Panc1 (cell line): ENCODE measurements at regions of chr7 and their contacts with region 1.

Region 1: GRCh38 chr7:151992375-151992774 is 33.1 kb upstream of the GALNT11 start:
- DNase-seq: peak; percentile 36
- ATAC-seq: peak; percentile 96
- H3K4me3 ChIP-seq: no peak overlapping the region
- H3K27ac ChIP-seq: no peak overlapping the region
- H3K4me1 ChIP-seq: peaks cover 3% of the 10 kb centered on the region; the same call in 1 of the 2 replicates
- H3K27me3 ChIP-seq: no peaks in the 10 kb centered on the region
- CTCF ChIP-seq: peak; percentile 77

Region 2: GRCh38 chr7:151459726-151460473 is 532.5 kb before region 1 on chr7:
- CTCF ChIA-PET with region 1: no interaction called
- POLR2A ChIA-PET with region 1: no interaction called
- in situ Hi-C with region 1: no loop called
- intact Hi-C with region 1: no loop called
- DNase-seq: peak; percentile 76
- ATAC-seq: peak; percentile 84
- H3K4me3 ChIP-seq: peak overlapping the region; percentile 7 to 45; a peak in 3 of 4 replicates
- H3K27ac ChIP-seq: peak overlapping the region; percentile 98
- H3K4me1 ChIP-seq: peaks cover 50% of the 10 kb centered on the region
- H3K27me3 ChIP-seq: no peaks in the 10 kb centered on the region
- CTCF ChIP-seq: no peak; the same call in 1 of the 2 replicates

Region 3: GRCh38 chr7:152025077-152025936 is 32.9 kb after region 1 on chr7 and contains the start of gene GALNT11:
- CTCF ChIA-PET with region 1: no interaction called
- POLR2A ChIA-PET with region 1: no interaction called
- in situ Hi-C with region 1: no loop called
- intact Hi-C with region 1: loop called (anchors 2 kb)
- DNase-seq: peak; percentile 41
- ATAC-seq: peak; percentile 99
- H3K4me3 ChIP-seq: peak within 1 kb of the TSS; percentile 77 to 86
- H3K27ac ChIP-seq: peak within 1 kb of the TSS; percentile 80
- H3K4me1 ChIP-seq: peaks cover 4% of the 10 kb centered on the region; the same call in 1 of the 2 replicates
- H3K27me3 ChIP-seq: no peaks in the 10 kb centered on the region; the same call in 1 of the 2 replicates
- CTCF ChIP-seq: peak; percentile 52; the same call in 1 of the 2 replicates
- total RNA-seq, gene GALNT11: 48.7 TPM